WTC11 (cell line): ENCODE measurements at regions of chr20 and their contacts with region 1.

Region 1: DNA sequence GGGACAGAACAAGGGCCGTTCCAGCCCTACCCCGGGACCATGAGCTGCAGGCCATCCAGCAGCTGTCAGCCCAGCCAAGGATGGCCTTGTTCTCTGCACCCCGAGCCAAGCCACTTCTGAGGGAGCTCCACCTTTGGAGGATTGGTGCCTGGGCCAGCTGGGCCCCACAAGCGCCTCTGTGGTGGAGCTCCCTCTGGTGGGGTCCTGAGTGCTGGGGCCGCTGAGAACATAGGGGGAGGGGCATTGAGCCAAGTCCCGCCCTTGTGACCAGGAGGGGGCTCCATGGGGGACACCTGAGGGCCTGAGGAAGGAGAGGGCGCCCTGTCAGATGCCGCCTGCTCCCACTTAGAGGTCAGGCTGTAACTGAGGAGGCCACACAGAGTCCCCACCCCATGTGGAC is 43.2 kb downstream of the YTHDF1 start:
- DNase-seq: peak; percentile 74
- ATAC-seq: peak; percentile 58
- H3K4me3 Mint-ChIP-seq: no peak overlapping the region
- H3K27ac Mint-ChIP-seq: no peak overlapping the region
- H3K4me1 Mint-ChIP-seq: peaks cover 6% of the 10 kb centered on the region
- H3K27me3 Mint-ChIP-seq: peaks cover 56% of the 10 kb centered on the region
- CTCF ChIP-seq: peak; percentile 25; the same call in 1 of the 2 replicates

Region 2: GRCh38 chr20:63014710-63015109 is 158.0 kb before region 1 on chr20:
- CTCF ChIA-PET with region 1: interaction called, 10 read pairs
- POLR2A ChIA-PET with region 1: no interaction called
- DNase-seq: peak; percentile 74
- ATAC-seq: peak; percentile 97
- H3K4me3 Mint-ChIP-seq: peak overlapping the region; percentile 56
- H3K27ac Mint-ChIP-seq: no peak overlapping the region
- H3K4me1 Mint-ChIP-seq: peaks cover 24% of the 10 kb centered on the region
- H3K27me3 Mint-ChIP-seq: peaks cover 33% of the 10 kb centered on the region
- CTCF ChIP-seq: no peak

Region 3: DNA sequence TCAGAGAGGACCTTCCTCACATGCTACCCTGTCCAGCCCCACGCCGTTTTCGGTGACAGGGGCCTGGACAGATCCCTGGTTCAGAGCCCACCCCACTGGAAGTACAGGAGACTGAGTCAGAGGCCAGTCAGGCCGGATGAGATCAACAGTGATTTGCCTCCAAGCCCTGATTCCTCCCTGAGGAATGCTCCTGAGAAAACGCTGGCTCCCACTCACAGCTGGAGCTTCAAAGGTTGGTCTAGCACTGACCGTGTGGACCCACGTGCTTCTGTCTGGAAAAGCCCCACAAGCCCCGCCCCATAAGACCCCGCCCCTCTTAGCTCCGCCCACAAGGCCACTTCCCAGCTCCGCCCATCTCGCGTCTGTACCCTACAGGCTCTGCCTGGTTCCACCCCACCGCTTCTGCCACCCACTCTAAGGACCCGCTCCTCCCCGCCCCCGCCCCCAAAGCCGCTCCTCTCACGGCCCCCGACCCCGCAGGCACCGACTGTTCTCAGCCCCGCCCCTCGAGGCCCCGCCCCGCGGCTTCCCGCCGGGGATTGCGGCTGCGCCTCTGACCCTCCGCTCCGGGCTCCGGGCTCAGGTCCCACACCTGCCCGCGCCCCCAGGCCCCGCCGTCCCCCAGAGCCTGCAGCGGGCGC is 101.1 kb before region 1 on chr20:
- CTCF ChIA-PET with region 1: interaction called, 12 read pairs
- POLR2A ChIA-PET with region 1: no interaction called
- DNase-seq: peak; percentile 80
- ATAC-seq: peak; percentile 90
- H3K4me3 Mint-ChIP-seq: peak overlapping the region; percentile 51
- H3K27ac Mint-ChIP-seq: no peak overlapping the region
- H3K4me1 Mint-ChIP-seq: peaks cover 4% of the 10 kb centered on the region
- H3K27me3 Mint-ChIP-seq: peaks cover 35% of the 10 kb centered on the region
- CTCF ChIP-seq: no peak

Region 4: GRCh38 chr20:63134201-63134612 is 38.5 kb before region 1 on chr20:
- CTCF ChIA-PET with region 1: interaction called, 13 read pairs
- POLR2A ChIA-PET with region 1: no interaction called
- DNase-seq: peak; percentile 57
- ATAC-seq: peak; percentile 39; the same call in 1 of the 2 replicates
- H3K4me3 Mint-ChIP-seq: no peak overlapping the region
- H3K27ac Mint-ChIP-seq: no peak overlapping the region
- H3K4me1 Mint-ChIP-seq: peaks cover 9% of the 10 kb centered on the region
- H3K27me3 Mint-ChIP-seq: no peaks in the 10 kb centered on the region; the same call in 1 of the 2 replicates
- CTCF ChIP-seq: no peak

Region 5: GRCh38 chr20:63360850-63361518 is 188.3 kb after region 1 on chr20 and contains the start of gene CHRNA4:
- CTCF ChIA-PET with region 1: interaction called, 10 read pairs
- POLR2A ChIA-PET with region 1: no interaction called
- DNase-seq: peak; percentile 49
- ATAC-seq: peak; percentile 41
- H3K4me3 Mint-ChIP-seq: peak within 1 kb of the TSS; percentile 60
- H3K27ac Mint-ChIP-seq: no peak within 1 kb of the TSS
- H3K4me1 Mint-ChIP-seq: peaks cover 11% of the 10 kb centered on the region
- H3K27me3 Mint-ChIP-seq: peaks cover 12% of the 10 kb centered on the region
- CTCF ChIP-seq: no peak
- total RNA-seq, gene CHRNA4: 2.5 to 5.7 TPM (median 4.8 TPM) in 3 replicates